ENCODE measurements at regions of chr12 and their contacts with region 1.

Region 1: DNA sequence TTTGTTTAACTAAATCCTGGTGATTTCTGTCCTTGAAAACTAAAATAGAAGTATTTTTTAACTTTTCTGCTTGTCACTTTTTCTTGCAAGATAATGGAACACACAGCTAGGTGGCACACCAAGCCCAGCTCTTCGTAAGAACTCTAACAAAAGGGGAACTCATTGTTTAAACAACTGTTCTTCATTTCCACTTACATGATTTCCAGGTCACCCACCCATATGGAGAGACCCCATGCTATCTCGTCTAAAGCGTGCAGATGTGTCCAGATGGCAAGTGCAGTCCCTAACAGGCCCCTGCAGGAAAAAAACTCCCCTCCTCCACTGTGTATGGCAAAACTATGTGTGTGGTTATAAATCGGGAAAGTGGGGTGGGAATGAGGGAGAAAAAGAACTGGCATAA is 43.3 kb upstream of the NT5DC3 start:
- DNase-seq: peak; percentile 16
- H3K4me3 ChIP-seq: no peak overlapping the region
- H3K27ac ChIP-seq: no peak overlapping the region
- H3K4me1 ChIP-seq: peaks cover 29% of the 10 kb centered on the region
- H3K27me3 ChIP-seq: no peaks in the 10 kb centered on the region
- CTCF ChIP-seq: peak; percentile 58 to 59

Region 2: DNA sequence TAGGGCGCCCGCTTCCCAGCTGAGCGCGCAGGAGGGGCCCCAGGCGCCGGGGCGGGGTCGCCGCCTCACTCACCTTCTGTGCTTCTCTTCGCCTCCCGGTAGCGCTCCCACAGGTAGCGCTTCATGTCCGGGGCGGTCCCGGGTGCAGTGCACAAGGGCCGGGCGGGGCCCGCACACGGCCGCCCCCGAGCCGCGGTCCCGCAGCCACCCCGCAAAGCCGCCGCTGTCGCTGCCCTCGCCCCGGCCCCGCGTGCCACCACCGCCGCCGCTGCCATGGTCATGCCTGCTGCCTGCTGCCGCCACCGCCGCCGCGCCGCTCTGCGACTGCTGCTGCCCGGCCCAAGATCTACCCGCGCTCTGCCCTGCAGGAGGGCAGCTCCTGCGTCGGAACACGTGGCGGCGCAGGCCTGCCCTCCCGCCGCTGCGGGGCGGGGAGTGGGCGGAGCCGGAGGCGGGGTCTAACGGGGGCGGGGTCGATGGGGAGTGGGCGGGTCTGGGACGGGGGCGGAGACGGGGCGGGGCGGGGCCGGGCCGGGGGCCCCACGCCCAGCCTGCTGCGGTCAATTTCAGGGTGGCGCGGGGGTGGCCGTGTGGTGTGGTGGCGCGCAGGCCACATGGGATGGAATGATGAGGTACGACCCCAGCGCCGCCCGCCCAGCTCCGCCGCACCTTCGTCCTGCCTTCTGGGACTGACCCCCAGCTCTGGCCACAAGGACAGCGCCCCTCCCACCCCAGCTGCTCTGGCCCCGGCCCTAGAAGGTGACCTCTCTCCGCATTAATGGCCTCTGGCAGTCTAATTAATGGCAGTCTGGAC is 43.2 kb before region 1 on chr12 and contains the start of gene NT5DC3:
- CTCF ChIA-PET with region 1: no interaction called
- dilution Hi-C with region 1: no loop called
- in situ Hi-C with region 1: no loop called
- intact Hi-C with region 1: no loop called
- DNase-seq: peak; percentile 85
- H3K4me3 ChIP-seq: peak within 1 kb of the TSS; percentile 71 to 87 (median 84)
- H3K27ac ChIP-seq: peak within 1 kb of the TSS; percentile 95
- H3K4me1 ChIP-seq: peaks cover 16% of the 10 kb centered on the region
- H3K27me3 ChIP-seq: no peaks in the 10 kb centered on the region
- CTCF ChIP-seq: no peak
- total RNA-seq, gene NT5DC3: 46.4 to 98.5 TPM

Region 3: GRCh38 chr12:103908866-103909265 is 24.6 kb after region 1 on chr12:
- CTCF ChIA-PET with region 1: no interaction called
- dilution Hi-C with region 1: no loop called
- in situ Hi-C with region 1: no loop called
- intact Hi-C with region 1: loop called (anchors 2 kb)
- DNase-seq: no peak
- H3K4me3 ChIP-seq: no peak overlapping the region
- H3K27ac ChIP-seq: no peak overlapping the region
- H3K4me1 ChIP-seq: peaks cover 27% of the 10 kb centered on the region
- H3K27me3 ChIP-seq: no peaks in the 10 kb centered on the region
- CTCF ChIP-seq: no peak

Region 4: GRCh38 chr12:103947871-103948555 is 63.7 kb after region 1 on chr12:
- CTCF ChIA-PET with region 1: no interaction called
- dilution Hi-C with region 1: loop called (anchors 5 kb)
- in situ Hi-C with region 1: no loop called
- intact Hi-C with region 1: no loop called
- DNase-seq: no peak
- H3K4me3 ChIP-seq: no peak overlapping the region
- H3K27ac ChIP-seq: no peak overlapping the region
- H3K4me1 ChIP-seq: no peaks in the 10 kb centered on the region
- H3K27me3 ChIP-seq: no peaks in the 10 kb centered on the region
- CTCF ChIP-seq: no peak

Region 5: DNA sequence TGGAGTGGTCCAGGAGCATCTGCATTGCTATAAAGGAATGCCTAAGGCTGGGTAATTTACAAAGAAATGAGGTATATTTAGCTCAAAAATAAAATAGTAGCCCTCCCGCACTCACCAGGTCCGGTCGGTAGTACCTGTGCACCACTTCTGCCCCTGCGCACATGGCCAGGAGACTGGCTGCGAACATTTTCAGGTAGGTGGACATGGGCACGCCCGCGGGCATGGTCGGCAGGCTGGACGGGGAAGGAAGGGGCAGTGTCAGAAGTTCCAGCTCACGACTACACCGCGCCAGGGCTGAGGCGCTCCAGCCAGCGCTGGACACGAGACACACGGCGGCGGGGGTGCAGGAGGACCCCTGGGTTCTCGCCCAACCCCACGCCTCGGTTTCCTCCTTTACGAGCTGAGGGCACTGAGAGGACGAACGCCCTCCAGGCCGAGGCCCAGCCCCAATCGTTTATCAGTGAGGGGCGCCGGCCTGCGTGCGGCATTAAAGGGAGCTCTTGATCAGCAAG is 72.3 kb after region 1 on chr12:
- CTCF ChIA-PET with region 1: no interaction called
- dilution Hi-C with region 1: no loop called
- in situ Hi-C with region 1: no loop called
- intact Hi-C with region 1: loop called (anchors 1 kb)
- DNase-seq: no peak
- H3K4me3 ChIP-seq: peak overlapping the region; percentile 72 to 83 (median 73)
- H3K27ac ChIP-seq: peak overlapping the region; percentile 76
- H3K4me1 ChIP-seq: peaks cover 13% of the 10 kb centered on the region
- H3K27me3 ChIP-seq: no peaks in the 10 kb centered on the region
- CTCF ChIP-seq: no peak

Region 6: GRCh38 chr12:104049903-104050356 is 165.6 kb after region 1 on chr12 and contains the start of gene GLT8D2:
- CTCF ChIA-PET with region 1: no interaction called
- dilution Hi-C with region 1: no loop called
- in situ Hi-C with region 1: no loop called
- intact Hi-C with region 1: loop called (anchors 2 kb)
- DNase-seq: peak; percentile 57
- H3K4me3 ChIP-seq: peak within 1 kb of the TSS; percentile 48 to 60 (median 53)
- H3K27ac ChIP-seq: peak within 1 kb of the TSS; percentile 47
- H3K4me1 ChIP-seq: peaks cover 22% of the 10 kb centered on the region
- H3K27me3 ChIP-seq: no peaks in the 10 kb centered on the region
- CTCF ChIP-seq: no peak
- total RNA-seq, gene GLT8D2: 20.0 to 20.1 TPM

Measured in mammary epithelial cell (primary cell).